ENCODE measurements at regions of chr16 and their contacts with region 1.

Region 1: DNA sequence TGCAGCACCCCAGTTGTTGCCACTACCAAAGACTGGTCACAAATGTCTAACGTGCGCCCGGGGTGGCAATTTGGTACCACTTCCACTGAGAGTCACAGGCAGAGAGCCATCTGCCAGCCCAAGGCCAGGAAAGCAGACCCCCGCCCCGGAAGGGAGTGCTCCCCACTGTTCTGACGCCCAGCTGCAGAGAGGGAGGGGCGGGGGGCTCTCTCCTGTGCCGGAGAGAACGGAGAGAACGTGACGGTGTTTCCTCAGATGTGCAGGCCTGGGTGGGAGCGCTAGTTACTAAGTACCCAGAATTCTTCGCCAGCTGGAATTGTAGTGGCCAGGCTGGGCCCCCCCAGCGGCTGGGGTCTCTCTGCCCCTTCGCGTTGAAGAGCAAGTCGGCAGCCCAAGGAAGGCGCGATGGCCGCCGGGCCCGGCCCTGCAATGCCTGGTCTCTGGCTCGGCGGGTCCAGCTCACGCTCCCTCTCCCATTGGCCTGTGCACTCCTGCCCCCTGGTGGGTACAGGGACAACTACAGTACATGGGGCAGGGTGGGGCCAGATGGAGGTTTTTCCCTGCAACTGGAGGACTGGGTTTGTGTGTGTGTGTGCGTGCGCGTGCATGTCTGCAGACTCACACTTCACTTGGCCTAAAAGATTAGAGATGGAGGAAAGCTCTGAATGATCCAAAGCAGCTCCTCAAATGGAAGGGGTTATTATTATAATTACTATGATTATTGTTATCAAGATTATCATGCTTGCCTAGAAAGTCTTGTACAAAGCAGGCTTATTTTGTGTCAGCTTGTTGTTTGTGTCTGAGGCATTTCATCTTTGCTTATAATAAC is 107.1 kb downstream of the AMFR start:
- DNase-seq: peak; percentile 82 to 89
- H3K4me3 ChIP-seq: peak overlapping the region; percentile 35 to 38
- H3K27ac ChIP-seq: no peak overlapping the region
- H3K4me1 ChIP-seq: peaks cover 0 to 12% (median 4%) of the 10 kb centered on the region in 4 donors
- H3K27me3 ChIP-seq: no peaks in the 10 kb centered on the region
- CTCF ChIP-seq: peak; percentile 94 to 97

Region 2: GRCh38 chr16:55949518-55949917 is 368.7 kb before region 1 on chr16:
- intact Hi-C with region 1: loop called (anchors 5 kb)
- DNase-seq: no peak
- H3K4me3 ChIP-seq: no peak overlapping the region
- H3K27ac ChIP-seq: no peak overlapping the region
- H3K4me1 ChIP-seq: peaks cover 0 to under 1% (median 0%) of the 10 kb centered on the region in 4 donors
- H3K27me3 ChIP-seq: no peaks in the 10 kb centered on the region
- CTCF ChIP-seq: no peak